PC-9 (cell line): ENCODE measurements at regions of chr7 and their contacts with region 1.

Region 1: GRCh38 chr7:117296066-117296465 is 26.8 kb downstream of the WNT2 start:
- DNase-seq: no peak
- H3K4me3 ChIP-seq: no peak overlapping the region
- H3K27ac ChIP-seq: no peak overlapping the region
- H3K4me1 ChIP-seq: no peaks in the 10 kb centered on the region
- H3K27me3 ChIP-seq: no peaks in the 10 kb centered on the region; the same call in 1 of the 2 replicates
- CTCF ChIP-seq: no peak

Region 2: GRCh38 chr7:117269417-117269816 is 26.6 kb before region 1 on chr7:
- CTCF ChIA-PET with region 1: no interaction called
- POLR2A ChIA-PET with region 1: interaction called, 19 read pairs
- intact Hi-C with region 1: no loop called
- DNase-seq: no peak
- H3K4me3 ChIP-seq: no peak overlapping the region
- H3K27ac ChIP-seq: no peak overlapping the region
- H3K4me1 ChIP-seq: no peaks in the 10 kb centered on the region
- H3K27me3 ChIP-seq: no peaks in the 10 kb centered on the region
- CTCF ChIP-seq: no peak